CD4-positive, alpha-beta memory T cell (primary cell): ENCODE measurements at regions of chr5 and their contacts with region 1.

Region 1: DNA sequence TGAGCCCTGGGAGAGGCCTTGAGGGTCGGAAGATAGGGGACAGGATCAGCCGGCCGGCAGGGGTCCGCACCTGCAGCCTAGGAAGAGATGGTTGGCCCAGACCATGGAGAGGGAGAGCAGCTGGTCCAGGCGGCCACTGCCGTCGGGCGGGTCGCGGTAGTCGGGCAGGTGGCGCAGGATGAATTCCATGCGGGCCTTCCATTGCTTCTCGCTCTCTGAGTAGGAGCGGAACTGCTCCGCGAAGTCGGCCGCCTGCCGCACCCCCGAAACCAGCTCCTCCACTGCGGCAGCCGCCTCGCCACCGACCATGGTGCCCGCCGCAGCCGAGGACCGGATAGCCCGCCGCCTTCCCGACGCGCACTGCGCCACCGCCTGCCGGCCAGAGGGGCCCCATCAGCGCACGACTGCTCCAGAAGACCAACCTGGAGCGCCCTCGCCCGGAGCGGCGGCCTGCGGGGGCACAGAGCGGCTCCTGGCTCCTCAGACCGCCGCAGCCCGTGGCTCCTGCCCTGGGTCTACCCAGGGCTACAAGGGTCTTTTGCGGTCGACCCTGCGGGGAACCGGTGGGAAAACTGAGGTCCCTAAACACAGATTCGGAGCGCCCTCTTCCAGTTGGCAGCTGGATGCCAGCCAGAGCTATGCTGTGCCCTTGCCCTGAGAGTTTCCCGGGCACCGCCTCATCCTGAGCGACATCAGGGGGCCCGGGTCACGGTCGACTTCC is at the start of gene CDKN2AIPNL:
- DNase-seq: peak; percentile 87 to 91 (median 88)
- H3K4me3 ChIP-seq: peak within 1 kb of the TSS; percentile 79 to 93
- H3K4me3 Mint-ChIP-seq: peak within 1 kb of the TSS; percentile 89 to 94 (median 91)
- H3K27ac ChIP-seq: peak within 1 kb of the TSS; percentile 70
- H3K27ac Mint-ChIP-seq: peak within 1 kb of the TSS; percentile 84 to 95 (median 91)
- H3K4me1 ChIP-seq: peaks cover 30% of the 10 kb centered on the region
- H3K4me1 Mint-ChIP-seq: peaks cover 18 to 47% (median 33%) of the 10 kb centered on the region in 4 donors
- H3K27me3 ChIP-seq: no peaks in the 10 kb centered on the region
- H3K27me3 Mint-ChIP-seq: no peaks in the 10 kb centered on the region
- total RNA-seq, gene CDKN2AIPNL: 14.7 to 15.1 TPM

Region 2: GRCh38 chr5:134125039-134126015 is 286.4 kb before region 1 on chr5:
- CTCF ChIA-PET with region 1: no interaction called
- POLR2A ChIA-PET with region 1: no interaction called
- intact Hi-C with region 1: no loop called
- DNase-seq: no peak
- H3K4me3 ChIP-seq: peak overlapping the region; percentile 36 to 63
- H3K4me3 Mint-ChIP-seq: peak overlapping the region; percentile 86 to 99 (median 96)
- H3K27ac ChIP-seq: peak overlapping the region; percentile 97
- H3K27ac Mint-ChIP-seq: peak overlapping the region; percentile 95 to 99 (median 98)
- H3K4me1 ChIP-seq: peaks cover 100% of the 10 kb centered on the region
- H3K4me1 Mint-ChIP-seq: peaks cover 44 to 99% (median 77%) of the 10 kb centered on the region in 4 donors
- H3K27me3 ChIP-seq: no peaks in the 10 kb centered on the region
- H3K27me3 Mint-ChIP-seq: no peaks in the 10 kb centered on the region

Region 3: DNA sequence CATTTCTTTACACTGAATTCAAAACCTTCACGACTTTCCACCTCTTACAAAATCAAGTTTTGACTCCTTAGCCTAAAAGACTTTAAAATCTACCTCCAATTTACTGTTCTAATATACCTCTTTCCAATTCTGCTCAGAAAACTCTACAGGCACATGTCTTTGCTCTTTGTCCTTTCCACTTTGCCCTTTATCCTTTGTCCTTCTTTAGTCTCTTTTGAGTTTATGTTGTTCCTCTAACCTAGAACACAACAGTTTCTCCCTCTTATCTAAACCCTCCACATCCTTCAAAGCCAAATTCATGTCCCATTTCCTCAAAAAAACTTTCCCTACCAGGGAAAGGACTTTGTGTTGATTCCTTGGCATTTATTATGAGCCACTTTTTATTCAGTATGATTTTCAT is 46.1 kb before region 1 on chr5:
- CTCF ChIA-PET with region 1: interaction called, 20 read pairs
- POLR2A ChIA-PET with region 1: interaction called, 13 read pairs
- intact Hi-C with region 1: no loop called
- DNase-seq: no peak
- H3K4me3 ChIP-seq: no peak overlapping the region
- H3K4me3 Mint-ChIP-seq: peak overlapping the region in 2 of 8 donors; percentile 0 to 21
- H3K27ac ChIP-seq: no peak overlapping the region
- H3K27ac Mint-ChIP-seq: peak overlapping the region in 3 of 7 donors; percentile 42 to 87 (median 63)
- H3K4me1 ChIP-seq: peaks cover 32% of the 10 kb centered on the region
- H3K4me1 Mint-ChIP-seq: peaks cover 23 to 30% (median 26%) of the 10 kb centered on the region in 4 donors
- H3K27me3 ChIP-seq: no peaks in the 10 kb centered on the region
- H3K27me3 Mint-ChIP-seq: no peaks in the 10 kb centered on the region

Region 4: GRCh38 chr5:134436523-134437339 is 25.0 kb after region 1 on chr5:
- CTCF ChIA-PET with region 1: interaction called, 3 read pairs
- POLR2A ChIA-PET with region 1: interaction called, 10 read pairs
- intact Hi-C with region 1: no loop called
- DNase-seq: peak; percentile 54 to 79 (median 70)
- H3K4me3 ChIP-seq: peak overlapping the region in 1 of 2 donors; percentile 23
- H3K4me3 Mint-ChIP-seq: peak overlapping the region; percentile 36 to 72 (median 70)
- H3K27ac ChIP-seq: peak overlapping the region; percentile 35
- H3K27ac Mint-ChIP-seq: peak overlapping the region; percentile 84 to 96 (median 91)
- H3K4me1 ChIP-seq: peaks cover 17% of the 10 kb centered on the region
- H3K4me1 Mint-ChIP-seq: peaks cover 9 to 19% (median 14%) of the 10 kb centered on the region in 4 donors
- H3K27me3 ChIP-seq: no peaks in the 10 kb centered on the region
- H3K27me3 Mint-ChIP-seq: no peaks in the 10 kb centered on the region

Region 5: DNA sequence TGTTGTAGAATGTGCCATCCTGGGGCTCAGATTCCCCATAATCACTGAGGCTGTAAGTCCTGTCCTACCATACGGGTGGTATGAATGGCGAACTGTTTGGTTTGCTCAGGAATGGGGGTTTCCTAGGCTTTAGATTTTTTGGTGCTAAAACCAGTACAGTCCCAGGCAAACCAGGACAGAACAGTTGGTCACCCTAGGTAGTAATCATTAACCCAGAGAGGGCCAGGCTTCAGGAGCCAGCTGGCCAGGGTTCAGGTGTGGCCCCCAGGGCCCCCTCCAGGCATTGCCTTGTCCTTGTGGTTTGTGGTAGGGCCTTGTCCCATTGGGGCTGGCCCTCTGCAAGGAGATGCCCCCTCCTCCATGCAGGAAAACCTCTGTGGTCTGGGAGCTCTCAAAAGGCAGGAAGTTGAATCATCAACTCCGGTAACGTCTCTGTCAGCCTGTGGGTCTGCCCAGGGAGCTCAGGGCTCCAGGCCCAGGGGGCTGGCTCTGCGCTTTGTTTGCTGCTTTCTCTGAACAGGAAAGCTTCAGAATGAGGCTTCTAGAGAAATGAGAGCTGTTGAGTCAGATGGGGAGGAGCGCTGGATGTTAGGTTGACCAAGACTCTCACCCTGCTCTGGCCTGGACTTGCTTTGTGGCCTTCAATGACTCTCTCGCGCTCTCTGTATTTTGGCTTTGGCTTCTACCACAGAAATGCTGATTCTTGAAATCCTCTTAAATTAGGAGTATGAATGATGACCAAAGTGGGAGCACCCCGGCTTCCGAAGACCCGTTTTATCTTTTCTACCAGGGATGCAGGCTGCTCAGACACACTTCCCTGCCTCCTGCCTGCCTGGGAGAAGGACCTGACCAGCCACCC is 91.6 kb after region 1 on chr5:
- CTCF ChIA-PET with region 1: interaction called, 5 read pairs
- POLR2A ChIA-PET with region 1: interaction called, 7 read pairs
- intact Hi-C with region 1: loop called (anchors 1 kb)
- DNase-seq: peak; percentile 16 to 69 (median 36)
- H3K4me3 ChIP-seq: no peak overlapping the region
- H3K4me3 Mint-ChIP-seq: peak overlapping the region in 7 of 8 donors; percentile 26 to 81 (median 62)
- H3K27ac ChIP-seq: peak overlapping the region; percentile 23
- H3K27ac Mint-ChIP-seq: peak overlapping the region; percentile 86 to 95 (median 91)
- H3K4me1 ChIP-seq: peaks cover 26% of the 10 kb centered on the region
- H3K4me1 Mint-ChIP-seq: peaks cover 14 to 33% (median 24%) of the 10 kb centered on the region in 4 donors
- H3K27me3 ChIP-seq: no peaks in the 10 kb centered on the region
- H3K27me3 Mint-ChIP-seq: no peaks in the 10 kb centered on the region

Region 6: GRCh38 chr5:134577796-134578363 is 166.2 kb after region 1 on chr5:
- CTCF ChIA-PET with region 1: interaction called, 8 read pairs
- POLR2A ChIA-PET with region 1: interaction called, 7 read pairs
- intact Hi-C with region 1: loop called (anchors 1 kb)
- DNase-seq: peak; percentile 65 to 70 (median 69)
- H3K4me3 ChIP-seq: no peak overlapping the region
- H3K4me3 Mint-ChIP-seq: no peak overlapping the region
- H3K27ac ChIP-seq: no peak overlapping the region
- H3K27ac Mint-ChIP-seq: peak overlapping the region; percentile 28 to 86 (median 78)
- H3K4me1 ChIP-seq: no peaks in the 10 kb centered on the region
- H3K4me1 Mint-ChIP-seq: peaks cover 3 to 17% (median 14%) of the 10 kb centered on the region in 4 donors
- H3K27me3 ChIP-seq: no peaks in the 10 kb centered on the region
- H3K27me3 Mint-ChIP-seq: no peaks in the 10 kb centered on the region